Heart left ventricle (tissue), 16 donors: ENCODE measurements at regions of chrX and their contacts with region 1.

Region 1: GRCh38 chrX:65595460-65595876 is 60.9 kb upstream of the LAS1L start:
- DNase-seq: peak; percentile 92 to 96 (median 93)
- ATAC-seq: peak; percentile 91 to 97 (median 94)
- H3K4me3 ChIP-seq: no peak overlapping the region
- H3K27ac ChIP-seq: peak overlapping the region; percentile 54 to 89 (median 83)
- H3K4me1 ChIP-seq: peaks cover 0 to 40% (median 9%) of the 10 kb centered on the region in 12 donors
- H3K27me3 ChIP-seq: peaks cover 0 to 20% (median 0%) of the 10 kb centered on the region in 9 donors
- CTCF ChIP-seq: peak; percentile 88 to 100 (median 96)
- POLR2A ChIP-seq: no peak

Region 2: DNA sequence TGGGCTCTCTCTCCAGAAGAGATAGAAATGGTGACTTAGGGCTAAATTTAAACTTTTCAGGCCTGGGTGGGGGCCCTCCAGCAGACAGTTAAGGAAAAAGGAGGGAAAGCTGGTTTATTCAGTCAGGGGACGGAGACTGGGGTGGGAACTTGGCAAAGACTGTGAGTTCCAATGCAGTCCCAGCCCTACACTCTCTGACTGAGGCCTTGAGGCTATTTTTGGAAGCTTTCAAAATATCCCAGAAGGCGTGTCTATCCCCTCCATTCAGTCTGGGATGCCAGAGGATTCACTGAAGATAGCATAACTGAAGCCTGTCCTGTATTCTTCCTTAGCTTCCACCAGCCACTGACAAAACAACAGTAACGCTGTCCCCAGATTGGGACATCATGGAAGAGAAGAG is 39.9 kb after region 1 on chrX:
- intact Hi-C with region 1: loop called in 6 of 10 experiments (anchors 2 to 5 kb)
- DNase-seq: peak in 4 of 5 donors; percentile 36 to 52 (median 44)
- ATAC-seq: peak; percentile 96 to 99 (median 96)
- H3K4me3 ChIP-seq: no peak overlapping the region
- H3K27ac ChIP-seq: peak overlapping the region; percentile 41 to 93 (median 75)
- H3K4me1 ChIP-seq: peaks cover 0 to 28% (median 16%) of the 10 kb centered on the region in 12 donors
- H3K27me3 ChIP-seq: no peaks in the 10 kb centered on the region
- CTCF ChIP-seq: no peak
- POLR2A ChIP-seq: no peak

Region 3: DNA sequence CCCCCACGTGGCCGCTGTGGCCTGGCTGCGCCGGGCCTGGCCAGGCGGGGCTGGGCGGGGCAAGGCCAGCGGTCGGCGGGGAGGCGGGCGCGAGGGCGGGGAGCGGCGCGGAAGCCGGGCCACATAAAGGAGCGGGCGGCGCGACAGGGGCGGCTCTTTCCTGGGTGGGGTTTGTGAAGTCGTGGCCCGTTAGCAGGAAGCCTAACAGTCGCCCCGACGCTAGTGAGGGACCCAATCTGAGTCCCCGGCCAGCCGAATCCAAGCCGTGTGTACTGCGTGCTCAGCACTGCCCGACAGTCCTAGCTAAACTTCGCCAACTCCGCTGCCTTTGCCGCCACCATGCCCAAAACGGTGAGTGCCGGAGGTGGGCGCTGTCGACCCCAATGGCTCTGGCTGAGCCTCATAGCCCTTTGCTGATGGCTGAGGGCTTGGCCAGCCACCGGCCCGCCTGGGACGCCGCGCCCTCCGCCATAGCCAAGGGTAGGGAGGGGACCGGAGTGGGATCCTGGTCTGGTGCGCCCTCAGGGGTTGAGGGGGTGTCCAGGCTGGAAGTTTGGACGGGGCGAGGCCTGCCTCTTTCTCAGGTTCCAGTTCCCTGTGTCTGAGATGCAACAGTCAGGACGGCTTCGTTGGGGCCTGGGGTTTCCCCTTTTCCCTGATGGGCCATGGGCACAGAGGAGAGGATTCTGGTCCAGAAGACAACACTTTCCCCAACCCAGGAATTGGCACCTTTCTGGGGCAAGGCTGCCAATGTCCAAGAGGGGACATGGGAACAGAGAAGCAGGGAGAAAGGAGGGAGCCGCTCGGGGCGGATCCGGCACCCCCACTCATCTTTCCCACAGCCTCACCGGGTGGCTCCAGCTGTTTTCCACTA is 72.3 kb after region 1 on chrX and contains the start of gene MSN:
- intact Hi-C with region 1: loop called in 7 of 10 experiments (anchors 2 to 10 kb)
- DNase-seq: peak; percentile 84 to 92 (median 87)
- ATAC-seq: peak; percentile 72 to 93 (median 90)
- H3K4me3 ChIP-seq: peak within 1 kb of the TSS; percentile 37 to 99 (median 84)
- H3K27ac ChIP-seq: peak within 1 kb of the TSS; percentile 93 to 100 (median 96)
- H3K4me1 ChIP-seq: peaks cover 0 to 45% (median 24%) of the 10 kb centered on the region in 12 donors
- H3K27me3 ChIP-seq: peaks cover 0 to 3% (median 0%) of the 10 kb centered on the region in 9 donors
- CTCF ChIP-seq: peak in 3 of 12 donors; percentile 6 to 23 (median 8)
- POLR2A ChIP-seq: peak in 1 of 2 donors; percentile 79
- total RNA-seq, gene MSN: 99.6 to 298 (median 153) TPM

Region 4: GRCh38 chrX:65677954-65678469 is 82.5 kb after region 1 on chrX:
- intact Hi-C with region 1: no loop called
- DNase-seq: peak in 3 of 5 donors; percentile 50 to 74 (median 53)
- ATAC-seq: peak in 3 of 4 donors; percentile 48 to 74 (median 53)
- H3K4me3 ChIP-seq: peak overlapping the region in 4 of 12 donors; percentile 5 to 28 (median 22)
- H3K27ac ChIP-seq: peak overlapping the region; percentile 61 to 100 (median 84)
- H3K4me1 ChIP-seq: peaks cover 0 to 100% (median 83%) of the 10 kb centered on the region in 12 donors
- H3K27me3 ChIP-seq: peaks cover 0 to 3% (median 0%) of the 10 kb centered on the region in 9 donors
- CTCF ChIP-seq: no peak
- POLR2A ChIP-seq: no peak

Region 5: DNA sequence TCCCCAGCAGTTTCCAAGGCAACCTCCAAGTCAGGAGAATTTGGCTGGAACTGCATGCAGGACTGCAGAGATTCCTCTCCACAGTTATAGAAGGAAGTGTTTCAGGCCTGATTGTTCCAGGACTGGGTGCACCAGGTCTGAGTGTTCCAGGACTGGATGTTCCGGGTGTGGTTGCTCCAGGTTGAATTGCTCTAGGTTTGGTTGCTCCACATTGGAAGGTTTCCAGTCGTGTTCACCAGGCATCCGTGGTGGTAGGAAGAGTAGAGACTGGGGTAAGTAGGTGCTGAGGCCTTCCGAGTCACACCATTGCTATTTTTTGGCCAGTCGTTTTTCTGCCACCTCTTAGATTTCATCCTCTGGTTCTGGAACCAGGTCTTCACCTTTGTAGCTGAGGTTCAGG is 177.4 kb after region 1 on chrX:
- intact Hi-C with region 1: loop called in 1 of 10 experiments (anchors 10 kb)
- DNase-seq: no peak
- ATAC-seq: peak in 1 of 4 donors; percentile 67
- H3K4me3 ChIP-seq: no peak overlapping the region
- H3K27ac ChIP-seq: no peak overlapping the region
- H3K4me1 ChIP-seq: no peaks in the 10 kb centered on the region
- H3K27me3 ChIP-seq: peaks cover 0 to 24% (median 0%) of the 10 kb centered on the region in 9 donors
- CTCF ChIP-seq: no peak
- POLR2A ChIP-seq: no peak

Region 6: DNA sequence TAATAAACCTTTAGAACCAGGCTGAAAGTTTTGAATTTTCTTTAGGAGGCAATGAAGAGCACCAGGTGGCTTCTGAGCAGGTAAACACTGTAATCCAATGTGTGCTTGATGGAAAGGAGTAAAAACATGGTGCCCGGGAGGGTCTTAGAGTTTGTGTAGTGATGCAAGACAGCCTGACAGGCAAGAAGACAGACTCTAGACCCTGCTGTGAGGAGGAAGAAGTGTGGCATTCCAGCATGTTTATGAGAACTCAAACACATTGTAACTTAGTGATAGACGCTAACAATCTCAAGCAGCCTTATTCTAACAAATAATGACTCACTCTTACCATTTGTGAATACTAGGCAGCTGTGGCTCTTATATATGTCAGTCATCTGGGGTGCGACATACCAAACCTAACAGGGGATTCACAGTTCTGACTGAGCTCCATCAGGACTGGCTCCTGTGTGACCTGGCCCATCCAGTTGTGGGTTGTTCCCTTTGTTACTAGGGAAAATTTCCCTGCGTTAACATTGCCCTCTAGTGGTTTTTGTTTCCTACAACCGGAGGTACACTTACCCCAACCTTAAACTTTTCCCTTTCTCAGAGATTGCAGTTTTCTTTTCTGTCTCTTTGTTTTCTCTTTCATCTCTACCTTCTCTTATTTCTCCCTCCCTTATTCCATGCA is 390.6 kb after region 1 on chrX:
- intact Hi-C with region 1: loop called in 2 of 10 experiments (anchors 5 kb)
- DNase-seq: peak in 2 of 5 donors; percentile 19 to 26
- ATAC-seq: peak; percentile 58 to 85 (median 82)
- H3K4me3 ChIP-seq: no peak overlapping the region
- H3K27ac ChIP-seq: no peak overlapping the region
- H3K4me1 ChIP-seq: peaks cover 0 to 24% (median 0%) of the 10 kb centered on the region in 12 donors
- H3K27me3 ChIP-seq: peaks cover 0 to 16% (median 0%) of the 10 kb centered on the region in 9 donors
- CTCF ChIP-seq: peak; percentile 38 to 68 (median 58)
- POLR2A ChIP-seq: no peak